Activated naive CD4-positive, alpha-beta T cell treated with anti-CD3 and anti-CD28 coated beads, Interleukin-2, amount 10 ng/mL, durations not matched to agents 7 days and 5 days (primary cell): ENCODE measurements at regions of chr1 and their contacts with region 1.

Region 1: DNA sequence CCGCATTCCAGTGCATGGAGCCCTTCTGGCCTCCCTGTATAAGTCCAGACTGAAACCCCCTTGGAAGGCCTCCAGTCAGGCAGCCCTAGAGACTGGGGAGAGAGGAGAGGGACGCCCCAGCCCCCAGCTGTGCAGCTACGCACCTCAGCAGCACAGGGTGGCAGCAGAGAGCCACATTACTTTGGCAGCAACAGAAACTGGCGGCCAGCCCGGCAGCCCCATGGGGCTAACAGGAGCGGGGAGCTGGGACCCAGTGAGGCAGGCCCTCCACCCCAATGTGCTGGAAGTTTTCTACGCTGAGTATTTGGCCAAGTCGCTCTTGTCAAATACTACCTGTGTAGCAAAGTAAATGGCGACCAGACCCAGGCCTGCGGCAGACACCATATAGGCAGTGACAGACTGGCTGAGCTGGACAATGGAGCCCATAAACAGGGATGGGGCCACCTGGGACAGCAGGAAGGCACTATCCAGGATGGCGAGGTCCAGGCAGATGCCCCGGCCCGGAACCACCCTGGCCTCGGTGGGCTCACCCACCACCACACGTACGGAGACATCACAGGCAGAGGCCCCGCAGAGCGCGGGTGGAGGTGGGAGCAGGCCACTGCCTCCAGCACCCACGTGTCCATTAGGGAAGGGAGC is 21.2 kb downstream of the SLC45A3 start:
- DNase-seq: peak; percentile 86
- H3K4me3 Mint-ChIP-seq: no peak overlapping the region
- H3K27ac Mint-ChIP-seq: no peak overlapping the region
- H3K4me1 Mint-ChIP-seq: no peaks in the 10 kb centered on the region
- H3K27me3 Mint-ChIP-seq: peaks cover 39% of the 10 kb centered on the region

Region 2: GRCh38 chr1:205485338-205486228 is 173.5 kb before region 1 on chr1:
- CTCF ChIA-PET with region 1: interaction called, 28 read pairs
- DNase-seq: peak; percentile 76
- H3K4me3 Mint-ChIP-seq: no peak overlapping the region
- H3K27ac Mint-ChIP-seq: no peak overlapping the region
- H3K4me1 Mint-ChIP-seq: peaks cover 9% of the 10 kb centered on the region
- H3K27me3 Mint-ChIP-seq: peaks cover 87% of the 10 kb centered on the region

Region 3: GRCh38 chr1:205543411-205544301 is 115.4 kb before region 1 on chr1:
- CTCF ChIA-PET with region 1: interaction called, 14 read pairs
- DNase-seq: peak; percentile 39
- H3K4me3 Mint-ChIP-seq: no peak overlapping the region
- H3K27ac Mint-ChIP-seq: no peak overlapping the region
- H3K4me1 Mint-ChIP-seq: peaks cover 8% of the 10 kb centered on the region
- H3K27me3 Mint-ChIP-seq: peaks cover 91% of the 10 kb centered on the region

Region 4: GRCh38 chr1:205600085-205600484 is 59.0 kb before region 1 on chr1:
- CTCF ChIA-PET with region 1: interaction called, 337 read pairs
- DNase-seq: no peak
- H3K4me3 Mint-ChIP-seq: no peak overlapping the region
- H3K27ac Mint-ChIP-seq: peak overlapping the region; percentile 72
- H3K4me1 Mint-ChIP-seq: peaks cover 38% of the 10 kb centered on the region
- H3K27me3 Mint-ChIP-seq: no peaks in the 10 kb centered on the region

Region 5: GRCh38 chr1:205680073-205680851 is 21.2 kb after region 1 on chr1 and contains the start of gene SLC45A3:
- CTCF ChIA-PET with region 1: interaction called, 28 read pairs
- DNase-seq: peak; percentile 53
- H3K4me3 Mint-ChIP-seq: peak within 1 kb of the TSS; percentile 70
- H3K27ac Mint-ChIP-seq: no peak within 1 kb of the TSS
- H3K4me1 Mint-ChIP-seq: peaks cover 11% of the 10 kb centered on the region
- H3K27me3 Mint-ChIP-seq: peaks cover 60% of the 10 kb centered on the region

Region 6: DNA sequence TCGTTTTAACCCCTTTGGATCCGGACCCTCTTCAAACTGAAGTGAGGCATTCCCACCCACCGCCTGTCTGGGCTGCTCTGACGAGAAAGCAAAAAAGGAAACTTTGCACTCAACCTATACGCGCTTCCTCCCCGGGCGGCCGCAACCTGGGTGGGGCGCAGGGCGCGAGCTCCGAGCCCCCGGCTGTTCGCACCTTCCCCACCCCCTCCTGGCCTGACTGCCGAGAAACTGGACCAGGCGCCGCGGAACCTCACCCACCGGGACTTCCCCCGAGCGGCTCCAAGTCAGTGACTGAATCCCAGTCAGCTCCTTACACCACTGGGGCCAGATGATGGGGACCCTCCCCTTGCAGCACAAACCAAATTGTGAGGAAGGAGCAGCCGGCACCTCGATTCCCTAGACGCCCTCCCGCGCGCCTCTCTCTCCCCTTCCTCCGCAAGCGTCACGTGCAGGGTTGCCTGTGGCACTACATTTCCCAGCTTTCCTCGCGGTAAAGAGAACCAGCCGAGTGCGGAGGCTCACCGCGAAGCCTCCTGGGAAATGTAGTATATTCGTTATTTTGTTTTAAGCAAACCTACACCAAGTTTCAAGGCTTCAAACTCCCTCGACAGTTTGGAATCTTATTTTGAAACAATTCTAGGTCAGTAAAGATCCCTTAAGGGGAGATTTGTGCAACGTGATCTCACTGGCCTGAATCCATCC is 116.1 kb after region 1 on chr1 and contains the start of gene RAB29:
- CTCF ChIA-PET with region 1: interaction called, 39 read pairs
- DNase-seq: peak; percentile 94
- H3K4me3 Mint-ChIP-seq: peak within 1 kb of the TSS; percentile 90
- H3K27ac Mint-ChIP-seq: peak within 1 kb of the TSS; percentile 92
- H3K4me1 Mint-ChIP-seq: peaks cover 59% of the 10 kb centered on the region
- H3K27me3 Mint-ChIP-seq: no peaks in the 10 kb centered on the region

Region 7: DNA sequence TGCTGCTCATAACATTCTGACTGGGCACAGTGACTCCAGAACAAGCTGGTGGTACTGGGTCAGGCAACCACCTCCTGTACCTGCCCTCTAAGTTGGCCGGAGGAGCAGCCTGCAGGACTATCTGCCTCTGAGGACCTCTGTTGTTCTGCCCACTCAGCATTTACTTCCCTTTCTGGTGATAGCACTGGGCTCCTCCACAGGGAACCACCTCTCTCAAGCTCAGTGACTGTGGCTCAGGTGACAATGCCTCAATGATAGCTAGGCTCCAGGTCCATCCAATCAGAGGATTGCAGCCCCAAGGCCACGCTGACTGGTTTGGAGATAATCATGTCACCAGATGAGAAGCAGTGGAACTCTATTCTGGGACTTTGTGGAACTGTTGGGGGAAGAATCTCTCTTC is 138.1 kb after region 1 on chr1:
- CTCF ChIA-PET with region 1: interaction called, 35 read pairs
- DNase-seq: no peak
- H3K4me3 Mint-ChIP-seq: no peak overlapping the region
- H3K27ac Mint-ChIP-seq: no peak overlapping the region
- H3K4me1 Mint-ChIP-seq: peaks cover 7% of the 10 kb centered on the region
- H3K27me3 Mint-ChIP-seq: no peaks in the 10 kb centered on the region